Thyroid gland (tissue), 4 donors: ENCODE measurements at regions of chr5 and their contacts with region 1.

Region 1: DNA sequence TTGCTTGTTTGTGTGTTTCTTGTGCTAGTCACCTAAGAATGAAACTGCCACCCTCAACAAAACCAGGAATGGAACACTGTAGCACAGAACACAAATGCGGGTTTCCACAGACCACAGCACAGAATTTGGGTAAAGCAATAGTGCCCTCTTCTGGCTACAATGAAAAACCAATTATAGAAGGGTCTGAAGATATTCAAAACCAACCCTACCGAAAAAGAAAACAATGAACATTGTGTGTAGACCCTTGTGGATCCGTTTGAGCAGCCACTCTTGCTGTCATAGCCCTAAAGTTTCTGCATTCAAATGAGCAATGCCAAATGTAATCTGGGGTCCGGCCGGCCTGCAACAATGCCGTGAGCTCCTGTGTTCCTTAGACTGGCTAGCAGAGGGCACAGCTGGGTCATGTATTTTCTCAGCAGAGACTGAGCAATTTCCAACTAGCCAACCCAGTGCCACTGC is 8.3 kb upstream of the ENC1 start:
- DNase-seq: peak; percentile 14 to 25
- H3K4me3 ChIP-seq: no peak overlapping the region
- H3K27ac ChIP-seq: no peak overlapping the region
- H3K4me1 ChIP-seq: peaks cover 0 to 11% of the 10 kb centered on the region in 2 donors
- H3K27me3 ChIP-seq: no peaks in the 10 kb centered on the region
- CTCF ChIP-seq: peak in 5 of 6 experiments; percentile 65 to 92 (median 73)
- POLR2A ChIP-seq: no peak

Region 2: DNA sequence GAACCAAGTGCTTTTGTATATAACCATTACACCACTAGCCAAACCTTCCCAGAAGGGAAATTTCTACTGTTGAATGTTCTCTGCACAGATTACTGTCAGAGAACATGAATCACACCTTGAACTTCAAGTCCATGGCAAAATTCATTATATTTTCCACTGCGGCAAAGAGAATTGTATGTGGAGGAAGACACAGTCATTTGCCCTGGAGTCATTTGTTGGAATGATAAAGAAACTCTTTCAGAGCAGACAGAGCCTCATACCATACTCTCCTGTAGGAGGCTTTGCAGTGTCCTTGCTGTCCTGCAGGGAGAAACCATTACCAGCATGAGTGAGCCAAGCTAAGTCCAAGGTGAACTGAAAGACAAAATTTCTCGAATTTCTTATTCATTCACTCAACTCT is 653.9 kb before region 1 on chr5:
- intact Hi-C with region 1: loop called (anchors 5 kb)
- DNase-seq: no peak
- H3K4me3 ChIP-seq: no peak overlapping the region
- H3K27ac ChIP-seq: no peak overlapping the region
- H3K4me1 ChIP-seq: peaks cover 17 to 25% of the 10 kb centered on the region in 2 donors
- H3K27me3 ChIP-seq: no peaks in the 10 kb centered on the region
- CTCF ChIP-seq: no peak
- POLR2A ChIP-seq: no peak